ENCODE measurements at regions of chr19 and their contacts with region 1.

Region 1: DNA sequence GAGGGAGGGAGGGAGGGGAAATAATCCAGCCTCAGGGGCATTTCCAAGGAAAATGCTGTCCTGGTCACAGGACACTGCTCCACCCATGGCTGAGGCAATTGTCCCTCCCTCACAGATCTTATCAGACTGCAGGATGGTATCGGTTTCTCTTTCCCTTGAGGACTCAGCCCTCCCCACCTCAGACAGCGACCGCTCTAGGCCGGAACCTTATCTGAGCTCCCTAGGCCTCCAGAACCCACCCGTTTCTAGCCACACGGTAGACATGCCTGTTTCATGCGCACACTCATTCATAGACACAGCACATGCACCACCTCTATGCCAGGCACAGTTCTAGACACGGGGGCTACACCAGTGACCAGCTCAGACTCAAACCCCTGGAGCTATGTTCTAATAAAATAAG is 10.1 kb upstream of the IZUMO2 start:
- DNase-seq: peak; percentile 71 to 86
- H3K4me3 ChIP-seq: peak overlapping the region; percentile 36; the same call in 1 of the 2 replicates
- H3K27ac ChIP-seq: peak overlapping the region; percentile 96
- H3K4me1 ChIP-seq: peaks cover 41% of the 10 kb centered on the region
- H3K27me3 ChIP-seq: no peaks in the 10 kb centered on the region
- CTCF ChIP-seq: no peak

Region 2: GRCh38 chr19:50197348-50197747 is 24.2 kb after region 1 on chr19:
- CTCF ChIA-PET with region 1: no interaction called
- POLR2A ChIA-PET with region 1: interaction called, 16 read pairs
- intact Hi-C with region 1: no loop called
- DNase-seq: no peak
- H3K4me3 ChIP-seq: no peak overlapping the region
- H3K27ac ChIP-seq: no peak overlapping the region
- H3K4me1 ChIP-seq: peaks cover 8% of the 10 kb centered on the region; the same call in 1 of the 2 replicates
- H3K27me3 ChIP-seq: no peaks in the 10 kb centered on the region
- CTCF ChIP-seq: no peak

Region 3: DNA sequence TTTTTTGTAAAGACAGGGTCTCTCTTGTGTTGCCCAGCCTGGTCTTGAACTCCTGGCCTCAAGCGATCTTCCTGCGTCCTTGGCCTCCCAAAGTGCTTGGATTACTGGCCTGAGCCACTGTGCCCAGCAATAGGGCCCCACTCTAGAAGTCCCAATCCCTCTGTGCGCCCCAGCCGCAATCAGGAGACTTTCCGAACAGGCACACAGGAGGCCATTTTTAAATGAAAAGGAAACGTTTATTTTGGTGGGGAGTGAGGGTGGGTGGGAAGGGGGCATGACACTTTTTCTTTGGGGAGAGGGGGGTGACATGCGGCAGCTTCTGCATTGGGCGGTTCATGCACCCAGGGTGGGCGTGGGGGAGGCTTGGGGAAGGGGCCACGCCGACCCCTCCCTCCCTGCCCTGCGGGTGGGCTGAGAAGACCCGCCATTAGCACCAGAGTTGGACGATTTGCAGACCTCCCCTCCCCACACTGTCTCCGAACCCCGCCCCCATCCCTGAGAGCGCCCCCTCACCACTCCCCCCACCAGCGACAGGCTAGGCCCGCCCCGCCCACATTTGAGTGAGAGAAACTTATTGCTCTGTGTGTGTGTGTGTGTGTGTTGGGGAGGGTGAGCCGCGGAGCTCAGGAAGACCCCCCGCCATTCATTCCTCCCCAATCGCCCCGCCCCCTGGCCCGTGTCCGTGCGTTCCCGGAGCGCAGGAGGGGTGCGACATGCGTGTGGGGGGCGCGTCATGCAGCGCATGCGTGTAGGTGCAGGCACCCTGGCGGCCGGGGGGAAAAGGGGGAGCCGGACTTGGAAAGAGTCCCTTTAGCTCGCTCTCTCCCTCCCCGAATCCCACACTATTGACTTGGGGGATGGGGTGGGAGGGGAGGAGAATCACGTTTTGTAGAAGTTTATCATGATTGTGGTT is 138.8 kb after region 1 on chr19:
- CTCF ChIA-PET with region 1: no interaction called
- POLR2A ChIA-PET with region 1: no interaction called
- intact Hi-C with region 1: no loop called
- DNase-seq: no peak
- H3K4me3 ChIP-seq: no peak overlapping the region
- H3K27ac ChIP-seq: no peak overlapping the region
- H3K4me1 ChIP-seq: 0 out of 2 replicates have a peak, but pooled peaks cover 3% of the 10 kb centered on the region
- H3K27me3 ChIP-seq: no peaks in the 10 kb centered on the region
- CTCF ChIP-seq: no peak

Region 4: DNA sequence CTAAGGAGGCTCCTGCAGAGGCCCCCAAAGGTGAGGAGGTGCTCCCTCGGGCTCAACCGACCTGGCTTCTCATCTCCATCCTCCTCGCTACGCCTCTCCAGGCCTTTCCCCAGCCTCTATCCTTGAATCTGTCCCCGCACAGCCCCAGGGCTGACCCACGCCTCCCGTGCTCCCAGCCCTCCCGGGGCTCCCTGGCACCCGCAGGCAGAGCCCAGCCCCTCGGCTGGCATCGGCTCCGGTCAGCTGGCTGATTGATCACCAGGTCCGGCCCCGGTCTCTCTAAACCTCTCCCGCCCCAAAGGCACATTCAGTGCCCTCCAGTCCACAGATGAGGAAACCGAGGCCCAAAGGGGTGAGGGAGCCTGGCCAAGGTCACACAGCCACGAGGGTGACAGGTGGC is 262.1 kb after region 1 on chr19:
- CTCF ChIA-PET with region 1: no interaction called
- POLR2A ChIA-PET with region 1: no interaction called
- intact Hi-C with region 1: no loop called
- DNase-seq: no peak
- H3K4me3 ChIP-seq: no peak overlapping the region
- H3K27ac ChIP-seq: no peak overlapping the region
- H3K4me1 ChIP-seq: peaks cover 11% of the 10 kb centered on the region
- H3K27me3 ChIP-seq: peaks cover 83% of the 10 kb centered on the region
- CTCF ChIP-seq: no peak

Region 5: DNA sequence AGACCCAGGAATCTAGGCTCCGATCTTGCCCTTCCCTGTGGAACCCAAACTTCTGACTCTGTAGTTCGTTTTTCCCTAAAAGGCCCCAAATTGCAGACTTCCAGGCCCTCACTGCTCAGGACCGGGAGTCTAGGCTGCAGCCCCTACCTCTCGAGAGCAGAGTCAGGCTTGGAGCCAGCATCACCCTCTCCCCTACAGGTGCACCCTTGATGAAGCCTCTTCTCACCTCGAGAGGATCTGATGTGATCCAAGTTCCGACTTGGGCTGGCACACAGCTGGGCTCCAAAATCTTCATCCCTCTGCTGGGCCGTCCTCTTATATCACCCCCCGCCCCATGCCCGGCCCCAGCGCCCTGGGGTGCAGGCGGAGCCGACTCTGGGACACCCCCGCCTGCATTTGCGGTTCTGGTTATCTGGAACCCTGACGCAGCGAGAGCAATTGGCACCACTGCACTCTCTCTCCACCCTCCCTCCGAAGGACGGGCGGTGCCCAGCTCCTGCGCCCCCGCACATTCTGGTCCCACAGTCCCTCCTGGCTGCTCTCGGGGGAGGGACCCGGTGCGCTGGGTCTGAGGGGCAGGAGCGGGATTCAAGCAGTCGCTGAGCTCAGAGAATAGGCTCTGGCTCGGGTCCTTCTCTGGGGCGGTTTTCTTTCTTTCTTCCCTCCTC is 810.6 kb after region 1 on chr19 and contains the start of gene KLK7:
- CTCF ChIA-PET with region 1: no interaction called
- POLR2A ChIA-PET with region 1: interaction called, 17 read pairs
- intact Hi-C with region 1: no loop called
- DNase-seq: peak in 1 of 2 experiments; percentile 65
- H3K4me3 ChIP-seq: no peak within 1 kb of the TSS
- H3K27ac ChIP-seq: no peak within 1 kb of the TSS
- H3K4me1 ChIP-seq: peaks cover 12% of the 10 kb centered on the region
- H3K27me3 ChIP-seq: no peaks in the 10 kb centered on the region
- CTCF ChIP-seq: no peak
- total RNA-seq, gene KLK7: 98.1 and 138 TPM in 2 replicates

Measured in PC-9 (cell line).